ENCODE measurements at regions of chr5 and their contacts with region 1.

Region 1: GRCh38 chr5:1641560-1642166 is 117.9 kb upstream of the LPCAT1 start:
- DNase-seq: peak; percentile 89
- H3K4me3 Mint-ChIP-seq: no peak overlapping the region
- H3K27ac Mint-ChIP-seq: no peak overlapping the region
- H3K4me1 Mint-ChIP-seq: peaks cover 8% of the 10 kb centered on the region
- H3K27me3 Mint-ChIP-seq: peaks cover 27% of the 10 kb centered on the region

Region 2: GRCh38 chr5:1161833-1162229 is 479.8 kb before region 1 on chr5:
- CTCF ChIA-PET with region 1: interaction called, 35 read pairs
- POLR2A ChIA-PET with region 1: no interaction called
- intact Hi-C with region 1: no loop called
- DNase-seq: no peak
- H3K4me3 Mint-ChIP-seq: no peak overlapping the region
- H3K27ac Mint-ChIP-seq: no peak overlapping the region
- H3K4me1 Mint-ChIP-seq: no peaks in the 10 kb centered on the region
- H3K27me3 Mint-ChIP-seq: peaks cover 28% of the 10 kb centered on the region

Region 3: GRCh38 chr5:1380011-1380817 is 261.4 kb before region 1 on chr5:
- CTCF ChIA-PET with region 1: interaction called, 38 read pairs
- POLR2A ChIA-PET with region 1: no interaction called
- intact Hi-C with region 1: no loop called
- DNase-seq: peak; percentile 64
- H3K4me3 Mint-ChIP-seq: peak overlapping the region; percentile 8
- H3K27ac Mint-ChIP-seq: no peak overlapping the region
- H3K4me1 Mint-ChIP-seq: peaks cover 12% of the 10 kb centered on the region
- H3K27me3 Mint-ChIP-seq: peaks cover 2% of the 10 kb centered on the region

Region 4: DNA sequence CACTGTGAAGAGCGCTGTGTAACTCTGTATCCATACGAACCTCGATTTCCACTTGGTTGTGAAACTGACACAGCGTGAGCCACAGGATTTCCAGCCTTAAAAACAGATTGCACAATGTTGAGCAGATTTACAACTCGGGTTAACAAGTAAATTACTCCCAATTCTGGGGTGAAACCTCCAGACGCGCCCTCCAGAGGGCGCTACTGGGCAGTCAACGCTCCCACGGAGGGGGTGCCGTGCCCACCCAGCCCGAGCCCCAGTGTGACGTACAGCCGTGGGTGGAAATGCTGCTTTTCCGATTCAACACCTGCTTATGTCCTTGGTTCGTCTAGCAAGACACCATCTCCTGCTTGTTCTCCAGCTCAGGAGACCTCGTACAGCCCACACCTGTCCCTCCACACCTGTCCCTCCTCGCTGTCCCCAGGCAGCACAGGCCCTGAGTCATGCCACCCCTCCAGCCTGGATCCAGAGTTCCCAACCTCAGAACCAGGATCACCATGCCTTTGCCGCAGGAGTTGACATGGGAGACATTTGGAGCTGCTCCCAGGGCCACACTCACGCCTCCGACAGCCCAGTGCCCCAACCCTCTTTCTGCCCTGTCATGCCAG is 162.0 kb before region 1 on chr5:
- CTCF ChIA-PET with region 1: interaction called, 31 read pairs
- POLR2A ChIA-PET with region 1: no interaction called
- intact Hi-C with region 1: loop called (anchors 2 kb)
- DNase-seq: peak; percentile 55
- H3K4me3 Mint-ChIP-seq: no peak overlapping the region
- H3K27ac Mint-ChIP-seq: no peak overlapping the region
- H3K4me1 Mint-ChIP-seq: no peaks in the 10 kb centered on the region
- H3K27me3 Mint-ChIP-seq: no peaks in the 10 kb centered on the region

Region 5: DNA sequence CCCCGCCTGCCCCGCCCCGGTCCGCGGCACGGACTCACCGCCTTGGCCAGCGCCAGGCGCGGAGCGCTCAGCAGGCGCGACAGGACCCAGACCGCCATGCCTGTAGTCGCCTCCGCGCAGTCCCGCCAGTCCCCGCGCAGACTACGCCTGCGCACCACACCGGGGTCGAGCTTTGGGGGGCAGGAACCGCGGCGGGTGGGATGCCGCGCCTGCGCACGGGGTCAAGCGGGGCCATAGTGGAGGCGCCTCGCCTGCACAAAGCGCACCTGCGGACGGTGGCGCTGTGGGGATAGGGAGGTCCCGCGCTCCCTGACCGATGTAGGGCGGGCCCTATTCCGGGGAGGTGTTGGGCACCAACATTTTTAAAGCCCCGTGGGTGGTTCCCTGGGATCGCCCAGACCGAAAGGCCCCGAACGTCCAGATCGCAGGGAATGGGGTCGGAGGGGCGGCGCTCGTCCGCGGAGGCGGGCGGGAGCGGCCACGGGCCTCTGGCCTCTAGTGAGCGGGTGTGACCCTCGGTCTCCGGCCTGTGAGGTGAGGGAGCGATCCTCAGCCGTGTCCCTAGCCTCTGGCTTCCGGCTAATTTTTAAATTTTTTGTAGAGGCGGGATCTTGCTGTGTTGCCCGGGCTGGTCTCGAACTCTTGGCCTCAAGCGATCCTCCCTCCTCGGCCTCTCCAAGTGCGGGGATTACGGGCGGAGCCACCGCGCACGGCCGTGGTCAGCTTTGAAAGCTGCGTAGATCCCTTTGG is 47.1 kb before region 1 on chr5:
- CTCF ChIA-PET with region 1: no interaction called
- POLR2A ChIA-PET with region 1: no interaction called
- intact Hi-C with region 1: loop called (anchors 2 kb)
- DNase-seq: peak; percentile 80
- H3K4me3 Mint-ChIP-seq: peak overlapping the region; percentile 71
- H3K27ac Mint-ChIP-seq: no peak overlapping the region
- H3K4me1 Mint-ChIP-seq: peaks cover 6% of the 10 kb centered on the region
- H3K27me3 Mint-ChIP-seq: no peaks in the 10 kb centered on the region

Region 6: DNA sequence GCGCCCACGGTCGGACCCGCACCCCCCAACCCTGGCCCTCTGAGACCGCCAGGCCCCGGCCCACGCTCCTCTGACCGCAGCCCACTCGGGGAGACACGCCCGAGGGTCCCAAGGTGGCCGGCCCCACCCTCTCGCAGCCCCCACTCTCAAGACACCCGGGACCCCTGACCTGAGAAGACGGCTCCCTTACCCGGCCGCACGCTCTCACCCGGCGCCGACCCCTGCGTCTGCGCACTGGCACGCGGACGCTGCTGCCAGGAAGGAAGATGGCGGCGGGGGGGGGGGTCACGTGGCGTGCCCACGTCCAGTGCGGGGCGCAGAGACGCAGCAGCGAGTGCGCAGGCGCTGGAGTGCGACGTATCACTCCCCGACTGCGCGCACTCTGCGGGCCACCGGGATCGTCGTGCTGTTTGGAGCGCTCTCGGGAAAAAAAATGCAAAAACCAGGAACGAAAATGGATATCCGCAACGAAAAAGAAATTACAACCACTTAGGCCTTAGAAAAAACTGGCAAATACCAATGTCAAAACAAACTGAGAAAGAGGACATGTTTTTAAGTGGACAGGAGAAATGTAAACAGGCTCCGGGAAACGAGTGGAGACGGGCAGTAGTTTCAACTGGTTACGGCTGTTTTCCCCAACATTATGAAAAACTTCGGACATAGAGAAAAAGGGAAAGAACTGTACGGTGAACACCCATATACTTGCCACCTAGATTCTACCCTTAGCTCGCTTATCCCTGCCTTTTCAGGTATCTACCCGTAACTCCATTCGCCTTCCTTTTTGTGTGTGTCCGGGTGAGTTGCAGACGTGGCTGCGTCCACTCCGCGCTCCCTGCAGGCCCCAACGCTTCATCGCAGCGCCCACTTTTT is 158.2 kb after region 1 on chr5 and contains the start of gene MRPL36:
- CTCF ChIA-PET with region 1: no interaction called
- POLR2A ChIA-PET with region 1: no interaction called
- intact Hi-C with region 1: no loop called
- DNase-seq: peak; percentile 95
- H3K4me3 Mint-ChIP-seq: peak within 1 kb of the TSS; percentile 100
- H3K27ac Mint-ChIP-seq: peak within 1 kb of the TSS; percentile 99
- H3K4me1 Mint-ChIP-seq: peaks cover 56% of the 10 kb centered on the region
- H3K27me3 Mint-ChIP-seq: no peaks in the 10 kb centered on the region
- total RNA-seq, gene MRPL36: 60.8 to 64.7 TPM